Heart right ventricle (tissue), 16 donors: ENCODE measurements at regions of chr17 and their contacts with region 1.

Region 1: DNA sequence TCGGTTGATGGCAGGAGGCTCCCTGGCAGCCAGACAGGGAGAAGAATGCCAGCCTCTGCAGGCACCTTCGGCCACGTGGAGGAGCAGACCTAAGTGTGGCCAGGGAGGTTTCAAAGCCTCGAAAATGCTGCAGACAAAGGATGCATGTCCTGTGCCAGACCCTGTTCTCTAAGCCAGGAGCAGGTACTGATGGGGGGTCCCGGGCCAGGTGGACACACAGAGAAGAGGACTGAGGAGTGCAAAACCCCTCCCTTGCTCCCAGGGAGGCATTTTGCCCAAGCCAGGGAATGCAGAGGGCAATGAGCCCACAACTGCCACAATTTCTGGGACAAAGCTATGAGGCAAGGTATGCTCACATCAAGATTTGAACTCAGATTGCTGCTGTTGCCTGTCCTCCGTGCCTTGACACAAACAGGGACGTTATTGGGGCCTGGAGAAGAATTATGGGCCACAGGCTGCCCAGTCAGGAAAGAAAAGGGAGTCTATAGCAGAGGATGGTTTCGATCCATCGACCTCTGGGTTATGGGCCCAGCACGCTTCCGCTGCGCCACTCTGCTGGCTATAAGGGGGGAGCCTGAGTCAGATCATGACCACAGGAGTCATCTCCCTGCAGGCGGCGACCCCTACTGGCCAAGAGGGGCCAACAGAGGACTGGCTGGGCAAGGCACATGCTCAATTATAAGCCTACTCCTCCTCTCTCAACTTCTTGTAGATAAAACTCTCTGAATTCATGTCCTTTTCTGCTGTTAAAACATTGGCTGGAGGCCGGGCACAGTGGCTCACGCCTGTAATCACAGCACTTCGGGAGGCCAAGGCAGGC is 25.1 kb upstream of the FOXK2 start:
- DNase-seq: peak; percentile 86 to 92
- ATAC-seq: peak; percentile 82 to 92 (median 86)
- H3K4me3 ChIP-seq: peak overlapping the region in 4 of 10 donors; percentile 5 to 19 (median 14)
- H3K27ac ChIP-seq: peak overlapping the region in 7 of 10 donors; percentile 0 to 62 (median 39)
- H3K4me1 ChIP-seq: peaks cover 6 to 31% (median 15%) of the 10 kb centered on the region in 9 donors
- H3K27me3 ChIP-seq: no peaks in the 10 kb centered on the region
- CTCF ChIP-seq: peak; percentile 84 to 97 (median 92)

Region 2: DNA sequence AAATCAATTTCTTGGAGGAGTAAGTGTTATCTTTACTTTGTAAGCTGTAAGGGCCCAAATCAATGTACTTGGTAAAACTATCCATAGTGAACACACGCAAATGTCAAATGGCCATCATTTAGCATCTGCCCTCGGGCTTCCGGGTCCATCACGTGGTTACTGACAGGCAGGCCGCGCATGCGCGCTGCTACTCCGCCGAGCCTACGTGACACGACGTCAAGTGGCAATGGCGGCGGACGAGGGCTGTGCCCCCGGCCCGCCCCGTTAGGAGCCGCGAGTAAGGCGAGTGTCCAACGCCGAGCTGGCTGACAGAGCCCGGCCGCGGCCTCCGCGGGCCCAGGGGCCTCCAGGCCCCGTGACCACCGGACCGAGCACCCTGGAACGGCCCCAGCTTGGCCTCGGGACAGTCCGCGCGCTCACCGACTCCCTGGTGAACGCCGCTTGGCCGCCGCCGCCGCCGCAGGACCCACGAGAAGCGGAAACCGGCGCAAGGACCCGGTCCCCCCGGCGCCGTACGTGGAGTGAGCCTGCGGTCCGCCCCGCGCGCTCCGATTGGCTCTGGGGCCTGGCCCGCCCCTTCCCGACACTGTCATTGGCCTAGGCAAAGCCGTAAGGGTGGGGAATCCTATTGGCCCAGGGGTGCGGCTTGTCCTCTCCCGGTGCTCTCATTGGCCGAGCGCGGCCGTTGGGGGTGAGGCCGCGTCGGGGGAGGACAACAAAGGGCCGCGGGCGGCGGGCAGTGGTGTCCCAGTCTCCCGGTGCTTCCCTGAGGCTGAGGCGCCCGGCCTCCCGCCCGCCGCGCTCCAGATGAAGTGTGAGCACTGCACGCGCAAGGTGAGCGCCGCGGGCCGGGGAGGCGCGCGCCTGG is 36.2 kb before region 1 on chr17 and contains the start of gene NARF:
- intact Hi-C with region 1: loop called in 1 of 10 experiments (anchors 5 kb)
- DNase-seq: peak; percentile 97 to 98
- ATAC-seq: peak; percentile 99
- H3K4me3 ChIP-seq: peak within 1 kb of the TSS; percentile 69 to 99 (median 88)
- H3K27ac ChIP-seq: peak within 1 kb of the TSS; percentile 99 to 100 (median 100)
- H3K4me1 ChIP-seq: peaks cover 10 to 38% (median 32%) of the 10 kb centered on the region in 9 donors
- H3K27me3 ChIP-seq: no peaks in the 10 kb centered on the region
- CTCF ChIP-seq: no peak
- total RNA-seq, gene NARF: 48.4 to 74.8 (median 60.4) TPM

Region 3: GRCh38 chr17:82518826-82519810 is 24.7 kb after region 1 on chr17 and contains the start of gene FOXK2:
- intact Hi-C with region 1: loop called in 1 of 10 experiments (anchors 1 kb)
- DNase-seq: peak; percentile 91 to 94
- ATAC-seq: peak; percentile 95 to 100 (median 100)
- H3K4me3 ChIP-seq: peak within 1 kb of the TSS; percentile 61 to 96 (median 86)
- H3K27ac ChIP-seq: peak within 1 kb of the TSS; percentile 88 to 100 (median 98)
- H3K4me1 ChIP-seq: peaks cover 0 to 43% (median 32%) of the 10 kb centered on the region in 9 donors
- H3K27me3 ChIP-seq: no peaks in the 10 kb centered on the region
- CTCF ChIP-seq: no peak
- total RNA-seq, gene FOXK2: 27.5 to 66.6 (median 31.0) TPM